ENCODE measurements at regions of chr16 and their contacts with region 1.

Region 1: GRCh38 chr16:75402821-75403475 is 30.4 kb downstream of the CFDP1 start:
- DNase-seq: no peak
- H3K4me3 ChIP-seq: no peak overlapping the region
- H3K27ac ChIP-seq: peak overlapping the region; percentile 83 to 86
- H3K4me1 ChIP-seq: peaks cover 3 to 14% of the 10 kb centered on the region in 2 donors
- H3K27me3 ChIP-seq: no peaks in the 10 kb centered on the region
- CTCF ChIP-seq: peak; percentile 71 to 77 (median 73)

Region 2: GRCh38 chr16:75198135-75198600 is 204.8 kb before region 1 on chr16:
- intact Hi-C with region 1: loop called (anchors 1 kb)
- DNase-seq: no peak
- H3K4me3 ChIP-seq: no peak overlapping the region
- H3K27ac ChIP-seq: no peak overlapping the region
- H3K4me1 ChIP-seq: peaks cover 0 to 15% of the 10 kb centered on the region in 2 donors
- H3K27me3 ChIP-seq: no peaks in the 10 kb centered on the region
- CTCF ChIP-seq: no peak

Region 3: GRCh38 chr16:75208961-75209451 is 193.9 kb before region 1 on chr16:
- intact Hi-C with region 1: no loop called
- DNase-seq: no peak
- H3K4me3 ChIP-seq: no peak overlapping the region
- H3K27ac ChIP-seq: no peak overlapping the region
- H3K4me1 ChIP-seq: no peaks in the 10 kb centered on the region
- H3K27me3 ChIP-seq: no peaks in the 10 kb centered on the region
- CTCF ChIP-seq: no peak

Region 4: DNA sequence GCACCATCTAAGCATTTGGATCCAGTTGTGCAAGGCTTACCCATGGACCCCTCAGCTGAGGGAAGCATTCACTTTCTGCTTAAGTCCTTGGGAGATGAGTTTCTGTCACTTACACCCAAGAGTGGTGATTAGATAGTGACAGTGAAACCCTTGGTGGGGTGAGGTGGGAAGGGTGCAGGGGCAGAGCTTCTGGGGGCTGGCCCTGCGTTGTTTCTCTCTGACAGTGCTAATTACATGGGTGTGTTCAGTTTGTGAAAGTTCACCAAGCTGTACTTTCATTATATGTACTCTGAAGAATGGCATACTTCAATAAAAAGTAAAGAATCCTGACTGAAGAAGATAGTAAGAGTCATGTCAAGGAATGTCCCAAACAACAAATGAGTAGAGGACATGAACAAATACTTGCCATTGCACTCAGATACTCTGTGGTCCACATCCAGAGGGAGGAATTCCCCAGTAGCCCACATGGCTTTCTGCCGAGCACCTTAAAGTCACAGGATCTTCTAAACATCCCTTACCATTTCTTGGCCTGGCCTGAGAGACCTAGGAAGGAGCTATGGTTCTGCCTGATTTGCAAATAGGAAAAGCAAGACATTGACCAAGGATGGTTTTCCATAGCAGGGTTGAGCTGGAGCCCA is 83.8 kb after region 1 on chr16:
- intact Hi-C with region 1: no loop called
- DNase-seq: no peak
- H3K4me3 ChIP-seq: no peak overlapping the region
- H3K27ac ChIP-seq: no peak overlapping the region
- H3K4me1 ChIP-seq: no peaks in the 10 kb centered on the region
- H3K27me3 ChIP-seq: no peaks in the 10 kb centered on the region
- CTCF ChIP-seq: no peak